Activated CD8-positive, alpha-beta T cell treated with anti-CD3 and anti-CD28 coated beads, Interleukin-2, amount 10 ng/mL, durations not matched to agents 7 days and 5 days (primary cell): ENCODE measurements at regions of chr6 and their contacts with region 1.

Region 1: GRCh38 chr6:90413867-90414266 is 117.2 kb upstream of the BACH2 start:
- DNase-seq: peak; percentile 87
- ATAC-seq: peak; percentile 92
- H3K4me3 Mint-ChIP-seq: peak overlapping the region; percentile 56
- H3K27ac Mint-ChIP-seq: peak overlapping the region; percentile 93
- H3K4me1 Mint-ChIP-seq: peaks cover 67% of the 10 kb centered on the region
- H3K27me3 Mint-ChIP-seq: no peaks in the 10 kb centered on the region

Region 2: GRCh38 chr6:90179190-90180169 is 234.4 kb before region 1 on chr6:
- CTCF ChIA-PET with region 1: no interaction called
- POLR2A ChIA-PET with region 1: no interaction called
- DNase-seq: peak; percentile 57
- ATAC-seq: no peak
- H3K4me3 Mint-ChIP-seq: no peak overlapping the region
- H3K27ac Mint-ChIP-seq: peak overlapping the region; percentile 92
- H3K4me1 Mint-ChIP-seq: peaks cover 84% of the 10 kb centered on the region
- H3K27me3 Mint-ChIP-seq: no peaks in the 10 kb centered on the region

Region 3: GRCh38 chr6:90296346-90297114 is 117.3 kb before region 1 on chr6 and contains the start of gene BACH2:
- CTCF ChIA-PET with region 1: interaction called, 3 read pairs
- POLR2A ChIA-PET with region 1: interaction called, 10 read pairs
- DNase-seq: peak; percentile 96
- ATAC-seq: peak; percentile 74
- H3K4me3 Mint-ChIP-seq: peak within 1 kb of the TSS; percentile 81
- H3K27ac Mint-ChIP-seq: peak within 1 kb of the TSS; percentile 84
- H3K4me1 Mint-ChIP-seq: peaks cover 32% of the 10 kb centered on the region
- H3K27me3 Mint-ChIP-seq: peaks cover 17% of the 10 kb centered on the region
- total RNA-seq, gene BACH2: 61.3 to 70.9 TPM

Region 4: DNA sequence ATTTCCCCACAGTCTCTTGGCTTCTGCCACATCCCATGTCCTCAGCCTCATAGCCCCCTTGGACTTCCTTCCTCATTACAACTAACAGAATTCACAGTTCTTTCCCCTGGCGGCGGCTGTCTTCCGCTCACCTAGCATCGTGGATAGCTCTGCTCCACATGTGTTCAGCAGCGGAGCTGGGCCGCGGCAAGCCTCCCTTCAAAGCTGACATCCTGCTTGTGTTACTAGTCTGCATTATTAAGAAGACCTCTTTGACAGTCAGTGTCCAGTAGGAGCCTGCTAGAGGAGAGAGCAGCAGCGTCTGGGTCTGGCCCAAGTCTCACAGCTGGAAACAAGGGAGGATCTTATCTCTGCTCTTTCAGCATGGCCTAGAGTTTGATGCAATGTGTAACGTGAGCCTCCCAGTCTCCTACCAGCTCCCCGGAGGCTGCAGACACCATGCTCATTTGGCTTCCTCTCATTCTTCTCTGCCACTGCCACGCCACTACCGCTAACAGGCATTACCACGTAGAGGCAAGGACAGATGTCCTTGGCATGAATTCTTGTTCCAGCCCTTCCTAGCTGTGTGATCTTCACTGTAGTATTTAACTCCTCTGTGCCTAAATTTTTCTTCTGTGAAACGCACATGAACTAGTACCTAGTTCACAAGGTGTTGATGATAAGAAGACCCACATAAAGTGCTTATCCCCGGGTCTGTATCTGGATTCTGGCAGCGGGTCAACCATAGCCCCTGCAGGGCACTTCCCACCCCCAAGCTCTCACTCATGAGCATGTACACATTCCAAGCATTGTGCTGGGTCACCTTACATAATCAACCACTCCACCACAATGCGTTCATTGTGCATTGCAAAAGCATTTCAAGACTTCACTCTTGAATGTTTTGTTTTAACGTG is 10.1 kb before region 1 on chr6:
- CTCF ChIA-PET with region 1: interaction called, 22 read pairs
- POLR2A ChIA-PET with region 1: interaction called, 60 read pairs
- DNase-seq: no peak
- ATAC-seq: no peak
- H3K4me3 Mint-ChIP-seq: no peak overlapping the region
- H3K27ac Mint-ChIP-seq: peak overlapping the region; percentile 85
- H3K4me1 Mint-ChIP-seq: peaks cover 75% of the 10 kb centered on the region
- H3K27me3 Mint-ChIP-seq: no peaks in the 10 kb centered on the region

Region 5: DNA sequence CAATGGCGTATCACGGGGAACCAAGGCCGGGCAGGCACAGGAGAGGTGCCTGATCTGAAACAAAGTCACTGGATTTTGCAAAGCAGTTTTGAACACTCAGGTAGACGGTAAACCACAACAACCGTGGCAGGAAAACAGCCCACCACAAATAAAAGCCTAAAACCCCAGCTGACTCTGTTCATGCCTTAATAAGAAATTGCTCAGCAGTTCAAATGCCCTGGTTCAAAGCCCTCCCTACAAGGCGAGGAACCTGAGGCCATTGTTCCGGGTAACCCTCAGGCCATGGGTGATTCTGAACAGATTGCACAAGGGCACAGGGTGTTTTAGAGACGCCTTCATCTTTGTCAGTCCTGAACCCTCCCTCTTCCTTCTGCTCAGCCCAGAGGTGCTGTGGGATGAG is 58.9 kb after region 1 on chr6:
- CTCF ChIA-PET with region 1: interaction called, 123 read pairs
- POLR2A ChIA-PET with region 1: interaction called, 18 read pairs
- DNase-seq: peak; percentile 76
- ATAC-seq: peak; percentile 49
- H3K4me3 Mint-ChIP-seq: peak overlapping the region; percentile 24
- H3K27ac Mint-ChIP-seq: peak overlapping the region; percentile 62
- H3K4me1 Mint-ChIP-seq: peaks cover 91% of the 10 kb centered on the region
- H3K27me3 Mint-ChIP-seq: peaks cover 3% of the 10 kb centered on the region